Dorsolateral prefrontal cortex (tissue), 120 donors: ENCODE measurements at regions of chr19 and their contacts with region 1.

Region 1: DNA sequence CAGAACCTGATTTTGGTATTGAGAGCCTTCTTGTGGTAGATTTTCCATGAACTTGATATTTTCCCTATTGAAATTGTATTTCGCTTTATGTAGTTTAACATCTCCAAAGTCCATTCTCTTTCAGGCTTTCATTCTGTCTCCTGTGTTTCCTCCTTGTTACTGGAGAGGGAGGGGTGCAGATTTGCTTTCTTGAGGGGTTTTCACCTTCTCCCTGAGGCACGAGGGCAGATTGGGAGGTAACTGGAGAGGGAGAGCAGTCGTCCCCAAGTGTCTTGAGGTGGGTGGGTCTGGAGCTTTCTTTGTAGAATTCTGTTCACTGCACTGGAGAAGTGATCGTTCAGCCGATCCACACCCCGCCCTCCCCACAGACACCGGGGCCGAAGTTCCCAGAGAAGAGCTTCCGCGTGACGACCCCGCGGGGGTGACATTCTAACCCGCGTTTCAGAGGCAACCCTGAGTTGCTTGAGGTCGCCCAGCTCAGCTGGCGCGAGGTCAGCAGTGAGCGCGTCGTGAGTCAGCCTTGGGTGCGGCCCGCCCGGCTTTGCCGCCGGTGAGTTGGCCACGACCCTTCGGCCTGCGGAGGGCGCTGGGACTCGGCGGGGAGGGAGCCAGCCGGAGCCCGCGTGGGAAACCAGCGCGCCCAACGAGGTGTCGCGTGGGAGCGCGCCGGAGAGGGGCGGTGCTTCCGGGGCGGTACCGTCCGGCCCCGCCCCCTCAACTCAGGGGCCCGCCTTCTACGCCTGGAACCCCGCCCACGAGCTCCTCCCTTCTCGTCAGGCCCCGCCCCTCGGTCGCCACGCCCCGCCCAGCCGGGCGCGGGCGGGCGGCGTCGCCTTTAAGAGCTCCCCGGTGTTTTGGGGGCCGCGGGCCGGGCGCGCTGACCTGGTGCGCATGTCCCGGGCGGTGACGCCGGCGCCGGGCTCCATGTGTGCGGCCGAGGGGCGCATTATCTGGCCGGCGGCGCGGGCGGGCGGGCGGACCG is at the start of gene GATAD2A:
- DNase-seq: peak; percentile 86 to 96 (median 93)
- H3K4me3 ChIP-seq: peak within 1 kb of the TSS; percentile 52 to 96 (median 82)
- H3K27ac ChIP-seq: peak within 1 kb of the TSS in 53 of 59 donors; percentile 20 to 89 (median 74)
- H3K27me3 ChIP-seq: no peaks in the 10 kb centered on the region
- CTCF ChIP-seq: peak in 53 of 56 donors; percentile 12 to 76 (median 53)
- total RNA-seq, gene GATAD2A: 27.7 to 72.8 (median 40.1) TPM

Region 2: DNA sequence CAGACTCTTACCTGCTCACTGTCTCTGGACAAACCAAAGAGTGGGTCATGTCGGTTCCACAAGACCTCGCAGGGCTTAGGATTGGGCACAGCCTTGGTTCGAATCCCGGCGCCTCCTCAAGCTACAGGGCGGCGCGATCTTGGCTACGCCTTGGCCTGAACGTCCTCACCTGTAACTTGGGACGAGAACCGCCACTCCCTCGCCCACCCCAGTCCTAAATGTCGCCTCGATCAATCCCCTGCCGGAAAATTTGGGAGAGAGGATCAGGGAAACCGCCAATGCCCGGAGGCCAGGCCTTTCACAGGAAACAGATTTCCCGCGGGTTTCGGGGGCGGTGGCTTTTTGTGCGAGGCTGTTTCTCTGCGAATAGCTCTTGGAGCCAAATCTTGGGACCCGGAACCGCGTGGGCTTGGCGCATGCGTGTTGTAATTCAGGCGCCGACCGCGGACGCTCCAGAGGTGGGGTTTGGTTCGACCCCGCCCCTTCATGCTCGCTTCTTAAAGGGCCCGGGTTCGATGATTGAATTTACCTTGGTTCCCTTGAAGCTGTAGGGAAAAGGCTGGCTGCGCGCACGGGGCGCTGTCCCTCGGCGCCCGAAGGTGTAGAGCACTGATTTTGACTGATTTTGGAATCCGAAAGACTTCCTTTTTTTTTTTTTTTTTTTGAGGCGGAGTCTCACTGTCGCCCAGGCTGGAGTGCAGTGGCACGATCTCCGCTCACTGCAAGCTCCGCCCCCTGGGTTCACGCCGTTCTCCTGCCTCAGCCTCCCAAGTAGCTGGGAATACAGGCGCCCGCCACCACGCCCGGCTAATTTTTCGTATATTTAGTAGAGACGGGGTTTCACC is 201.9 kb before region 1 on chr19 and contains the start of gene NR2C2AP:
- intact Hi-C with region 1: loop called in 1 of 2 experiments (anchors 10 kb)
- DNase-seq: peak; percentile 89 to 94 (median 92)
- H3K4me3 ChIP-seq: peak within 1 kb of the TSS; percentile 52 to 89 (median 75)
- H3K27ac ChIP-seq: peak within 1 kb of the TSS in 55 of 59 donors; percentile 37 to 88 (median 75)
- H3K27me3 ChIP-seq: peaks cover 0 to 3% (median 0%) of the 10 kb centered on the region in 45 donors
- CTCF ChIP-seq: peak in 16 of 56 donors; percentile 8 to 35 (median 16)
- total RNA-seq, gene NR2C2AP: 6.3 to 17.2 (median 11.1) TPM

Region 3: GRCh38 chr19:19366612-19367396 is 38.4 kb before region 1 on chr19:
- intact Hi-C with region 1: loop called in 1 of 2 experiments (anchors 5 kb)
- DNase-seq: peak in 6 of 10 donors; percentile 35 to 67 (median 42)
- H3K4me3 ChIP-seq: no peak overlapping the region
- H3K27ac ChIP-seq: no peak overlapping the region
- H3K27me3 ChIP-seq: no peaks in the 10 kb centered on the region
- CTCF ChIP-seq: peak; percentile 60 to 92 (median 83)

Region 4: GRCh38 chr19:19385108-19385899 is 19.9 kb before region 1 on chr19:
- intact Hi-C with region 1: loop called in 1 of 2 experiments (anchors 2 kb)
- DNase-seq: peak; percentile 99 to 100 (median 100)
- H3K4me3 ChIP-seq: peak overlapping the region; percentile 42 to 99 (median 82)
- H3K27ac ChIP-seq: peak overlapping the region in 44 of 59 donors; percentile 11 to 90 (median 69)
- H3K27me3 ChIP-seq: no peaks in the 10 kb centered on the region
- CTCF ChIP-seq: peak in 44 of 56 donors; percentile 12 to 64 (median 38)

Region 5: DNA sequence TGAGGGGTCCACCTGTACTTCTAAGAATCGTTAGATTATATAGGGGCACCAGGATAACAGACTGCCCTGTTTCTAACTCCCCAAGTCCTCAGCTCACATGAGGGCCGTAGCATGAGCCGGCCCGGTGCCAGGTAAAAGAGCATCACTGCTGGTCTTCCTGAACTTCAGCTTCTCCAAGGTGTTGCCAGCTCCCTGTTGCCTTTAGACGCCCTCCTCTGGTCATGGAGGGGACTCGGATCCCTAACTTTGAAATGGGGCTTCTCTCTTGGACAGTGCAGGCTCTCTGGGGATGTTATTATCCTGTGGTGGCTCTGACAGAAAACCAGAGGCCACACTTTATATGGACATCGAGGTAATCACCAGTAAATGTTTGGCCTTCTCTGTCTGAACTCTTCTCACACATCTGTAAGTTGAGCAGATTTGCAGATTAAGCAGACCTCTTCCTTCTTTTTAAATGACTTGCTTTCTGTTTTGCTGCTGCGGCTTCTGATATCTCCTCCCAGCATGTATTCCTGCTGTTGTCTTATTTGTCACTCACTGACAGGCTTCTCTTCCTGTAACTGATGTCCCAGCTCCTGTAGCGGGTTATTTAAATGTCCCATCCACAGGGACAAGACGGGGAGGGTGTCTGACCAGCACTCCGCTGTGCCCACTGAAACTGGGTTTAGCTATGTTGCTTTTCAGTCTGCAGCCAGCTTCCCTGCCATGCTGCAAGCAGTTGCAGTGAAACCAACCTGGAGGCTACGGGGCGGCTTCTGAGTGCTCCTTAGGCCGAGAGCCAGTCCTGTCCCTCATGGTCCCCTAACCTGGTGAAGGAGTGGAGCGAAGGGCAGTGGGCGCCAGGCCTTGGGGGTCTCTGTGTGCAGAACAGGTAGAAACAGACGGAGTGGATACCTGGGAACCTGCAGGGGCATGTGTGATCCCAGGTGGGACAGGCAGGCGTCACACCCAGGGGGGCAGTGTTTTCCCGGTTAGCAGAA is 71.0 kb after region 1 on chr19:
- intact Hi-C with region 1: no loop called
- DNase-seq: peak in 1 of 10 donors; percentile 41
- H3K4me3 ChIP-seq: peak overlapping the region in 1 of 59 donors; percentile 13
- H3K27ac ChIP-seq: peak overlapping the region in 1 of 59 donors; percentile 13
- H3K27me3 ChIP-seq: no peaks in the 10 kb centered on the region
- CTCF ChIP-seq: peak in 21 of 56 donors; percentile 11 to 39 (median 23)

Region 6: GRCh38 chr19:19719798-19720197 is 314.6 kb after region 1 on chr19:
- intact Hi-C with region 1: no loop called
- DNase-seq: no peak
- H3K4me3 ChIP-seq: no peak overlapping the region
- H3K27ac ChIP-seq: no peak overlapping the region
- H3K27me3 ChIP-seq: no peaks in the 10 kb centered on the region
- CTCF ChIP-seq: no peak